OCI-LY7 (cell line): ENCODE measurements at regions of chr17 and their contacts with region 1.

Region 1: DNA sequence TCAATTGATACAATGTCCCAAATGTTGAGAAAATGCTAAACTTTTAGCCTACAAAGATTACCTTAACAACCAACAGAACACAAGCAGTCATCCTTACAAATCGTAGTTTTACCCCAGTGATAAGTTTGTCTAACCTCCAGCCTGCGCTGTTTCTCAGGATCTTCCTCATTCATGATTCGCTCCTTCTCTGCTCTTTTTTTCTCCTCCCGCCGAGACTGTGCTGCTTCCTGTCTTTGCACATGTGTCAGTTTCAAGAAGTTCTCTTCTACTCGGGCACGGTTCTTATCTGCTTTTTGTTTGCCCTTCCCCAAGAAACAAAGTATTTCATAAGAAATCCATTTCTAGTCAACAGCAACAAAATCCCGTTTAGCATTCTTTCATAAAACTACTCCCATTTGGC is 10.2 kb upstream of the STRADA start:
- DNase-seq: no peak
- H3K4me3 ChIP-seq: no peak overlapping the region
- H3K27ac ChIP-seq: no peak overlapping the region
- H3K4me1 ChIP-seq: peaks cover 4% of the 10 kb centered on the region
- CTCF ChIP-seq: no peak

Region 2: DNA sequence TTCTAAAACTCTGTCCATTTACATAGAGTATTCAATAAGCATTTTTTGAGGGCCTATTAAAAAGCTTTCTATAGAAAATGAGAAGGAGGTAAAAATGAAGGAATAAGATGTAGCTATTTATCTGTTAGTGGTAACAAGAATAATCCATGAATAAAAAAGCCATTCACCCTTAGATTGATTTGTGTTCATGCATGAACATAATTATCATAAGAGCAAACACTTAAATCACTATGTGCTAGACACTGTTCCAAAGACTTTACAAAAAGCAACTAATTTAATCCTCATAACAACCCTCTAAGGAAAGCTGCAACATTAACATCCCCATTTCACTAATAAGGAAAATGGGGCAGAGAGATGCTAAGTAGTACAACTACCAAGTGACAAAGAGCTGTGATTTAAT is 14.9 kb after region 1 on chr17:
- CTCF ChIA-PET with region 1: no interaction called
- POLR2A ChIA-PET with region 1: interaction called, 13 read pairs
- intact Hi-C with region 1: no loop called
- DNase-seq: no peak
- H3K4me3 ChIP-seq: no peak overlapping the region
- H3K27ac ChIP-seq: no peak overlapping the region
- H3K4me1 ChIP-seq: peaks cover 11% of the 10 kb centered on the region
- CTCF ChIP-seq: no peak

Region 3: GRCh38 chr17:63809970-63810369 is 58.2 kb after region 1 on chr17:
- CTCF ChIA-PET with region 1: no interaction called
- POLR2A ChIA-PET with region 1: interaction called, 7 read pairs
- intact Hi-C with region 1: loop called (anchors 10 kb)
- DNase-seq: no peak
- H3K4me3 ChIP-seq: no peak overlapping the region
- H3K27ac ChIP-seq: no peak overlapping the region
- H3K4me1 ChIP-seq: no peaks in the 10 kb centered on the region
- CTCF ChIP-seq: no peak

Region 4: GRCh38 chr17:63827002-63827771 is 75.4 kb after region 1 on chr17 and contains the starts of genes FTSJ3 and PSMC5:
- CTCF ChIA-PET with region 1: no interaction called
- POLR2A ChIA-PET with region 1: no interaction called
- intact Hi-C with region 1: no loop called
- DNase-seq: peak; percentile 97
- H3K4me3 ChIP-seq: peak within 1 kb of the TSS; percentile 78
- H3K27ac ChIP-seq: peak within 1 kb of the TSS; percentile 67
- H3K4me1 ChIP-seq: peaks cover 23% of the 10 kb centered on the region
- CTCF ChIP-seq: peak; percentile 78
- total RNA-seq, gene FTSJ3: 32.4 and 43.0 TPM in 2 replicates
- total RNA-seq, gene PSMC5: 32.6 and 42.7 TPM in 2 replicates